ENCODE measurements at regions of chr4 and their contacts with region 1.

Region 1: DNA sequence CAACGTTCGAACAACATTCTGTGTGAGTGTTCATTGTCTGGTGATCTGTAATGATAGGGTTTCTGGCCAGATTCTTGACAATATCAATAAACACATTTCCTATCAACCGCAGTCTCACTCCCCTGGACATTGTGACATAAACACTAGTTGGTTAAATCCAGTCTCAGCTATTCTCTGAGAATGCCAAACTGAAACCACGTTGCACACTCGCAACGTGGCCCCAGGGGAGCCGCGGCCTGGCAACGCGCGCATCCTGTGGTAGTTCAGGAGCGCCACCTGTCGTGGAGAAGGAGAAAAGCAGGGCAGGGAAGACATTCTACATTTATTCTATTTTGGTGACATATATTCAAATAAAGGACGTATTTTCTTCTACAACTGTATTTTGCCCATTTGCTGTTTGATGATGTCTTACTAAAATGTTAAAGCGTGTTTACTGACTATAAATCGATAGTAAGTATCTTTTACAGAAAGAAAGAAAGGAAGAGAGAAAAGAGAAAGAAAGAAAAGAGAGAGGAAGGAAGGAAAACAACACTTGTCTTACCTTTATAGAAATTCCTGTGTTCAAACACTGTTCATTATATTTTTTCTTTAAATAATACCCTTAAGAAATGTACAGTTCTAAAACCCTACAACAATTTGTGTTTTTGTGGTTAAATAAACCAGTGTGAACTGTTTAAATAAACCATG is 738.3 kb upstream of the FRG1 start:
- DNase-seq: peak in 1 of 2 experiments; percentile 72
- H3K4me3 ChIP-seq: no peak overlapping the region
- H3K27ac ChIP-seq: no peak overlapping the region
- H3K4me1 ChIP-seq: peaks cover 0 to 2% (median 0%) of the 10 kb centered on the region in 4 experiments; a peak in 2 of 7 replicates
- H3K27me3 ChIP-seq: no peaks in the 10 kb centered on the region
- CTCF ChIP-seq: peak; percentile 74 to 90 (median 86)
- EP300 ChIP-seq: no peak
- POLR2A ChIP-seq: no peak
- RAD21 ChIP-seq: peak; percentile 98 to 99

Region 2: DNA sequence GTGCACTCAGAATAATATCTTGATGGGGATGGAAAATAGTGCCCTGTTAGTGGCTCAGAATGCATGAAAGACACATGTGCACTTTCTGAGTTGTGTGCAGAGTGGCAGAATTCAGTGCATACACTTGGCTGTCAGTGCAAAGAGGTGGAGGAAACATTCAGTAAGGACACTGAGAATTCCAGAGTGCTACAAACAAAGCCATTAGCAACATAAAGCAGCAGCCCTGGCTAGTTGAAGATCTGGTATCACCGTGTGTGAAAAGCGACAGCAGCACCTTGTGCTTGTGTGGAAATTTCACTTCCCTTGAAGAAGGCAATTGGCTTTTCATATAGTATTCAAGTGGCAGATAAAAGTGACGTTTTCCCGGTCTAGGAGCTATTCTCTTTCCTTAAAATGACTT is 252.7 kb before region 1 on chr4:
- CTCF ChIA-PET with region 1: no interaction called
- POLR2A ChIA-PET with region 1: no interaction called
- DNase-seq: no peak
- H3K4me3 ChIP-seq: no peak overlapping the region
- H3K27ac ChIP-seq: no peak overlapping the region
- H3K4me1 ChIP-seq: peaks cover 0 to 2% (median 0%) of the 10 kb centered on the region in 4 experiments; a peak in 1 of 7 replicates
- H3K27me3 ChIP-seq: no peaks in the 10 kb centered on the region
- CTCF ChIP-seq: no peak
- EP300 ChIP-seq: no peak
- POLR2A ChIP-seq: no peak
- RAD21 ChIP-seq: peak in 1 of 2 experiments; percentile 17; a peak in 1 of 4 replicates

Region 3: GRCh38 chr4:189096717-189097116 is 105.6 kb before region 1 on chr4:
- CTCF ChIA-PET with region 1: interaction called, 32 read pairs
- POLR2A ChIA-PET with region 1: no interaction called
- DNase-seq: peak in 1 of 2 experiments; percentile 86
- H3K4me3 ChIP-seq: no peak overlapping the region
- H3K27ac ChIP-seq: no peak overlapping the region
- H3K4me1 ChIP-seq: no peaks in the 10 kb centered on the region
- H3K27me3 ChIP-seq: no peaks in the 10 kb centered on the region
- CTCF ChIP-seq: peak; percentile 87 to 99 (median 89)
- EP300 ChIP-seq: no peak
- POLR2A ChIP-seq: no peak
- RAD21 ChIP-seq: peak; percentile 69 to 80

Region 4: GRCh38 chr4:189124149-189124758 is 78.1 kb before region 1 on chr4:
- CTCF ChIA-PET with region 1: interaction called, 12 read pairs
- POLR2A ChIA-PET with region 1: no interaction called
- DNase-seq: no peak
- H3K4me3 ChIP-seq: no peak overlapping the region
- H3K27ac ChIP-seq: no peak overlapping the region
- H3K4me1 ChIP-seq: no peaks in the 10 kb centered on the region
- H3K27me3 ChIP-seq: no peaks in the 10 kb centered on the region
- CTCF ChIP-seq: peak; percentile 61 to 72 (median 69)
- EP300 ChIP-seq: no peak
- POLR2A ChIP-seq: no peak
- RAD21 ChIP-seq: peak; percentile 89 to 92

Region 5: GRCh38 chr4:189162073-189162789 is 40.1 kb before region 1 on chr4:
- CTCF ChIA-PET with region 1: interaction called, 12 read pairs
- POLR2A ChIA-PET with region 1: no interaction called
- DNase-seq: no peak
- H3K4me3 ChIP-seq: peak overlapping the region in 1 of 4 experiments; percentile 39; a peak in 3 of 8 replicates
- H3K27ac ChIP-seq: peak overlapping the region; percentile 65
- H3K4me1 ChIP-seq: peaks cover 0 to 25% (median 11%) of the 10 kb centered on the region in 4 experiments; a peak in 5 of 7 replicates
- H3K27me3 ChIP-seq: no peaks in the 10 kb centered on the region
- CTCF ChIP-seq: no peak
- EP300 ChIP-seq: no peak
- POLR2A ChIP-seq: peak in 1 of 2 experiments; percentile 58; a peak in 1 of 3 replicates
- RAD21 ChIP-seq: no peak; a peak in 1 of 4 replicates

Region 6: GRCh38 chr4:189228720-189229119 is 26.4 kb after region 1 on chr4:
- CTCF ChIA-PET with region 1: no interaction called
- POLR2A ChIA-PET with region 1: no interaction called
- DNase-seq: no peak
- H3K4me3 ChIP-seq: no peak overlapping the region
- H3K27ac ChIP-seq: no peak overlapping the region
- H3K4me1 ChIP-seq: no peaks in the 10 kb centered on the region
- H3K27me3 ChIP-seq: no peaks in the 10 kb centered on the region
- CTCF ChIP-seq: no peak
- EP300 ChIP-seq: no peak
- POLR2A ChIP-seq: no peak
- RAD21 ChIP-seq: no peak

Region 7: DNA sequence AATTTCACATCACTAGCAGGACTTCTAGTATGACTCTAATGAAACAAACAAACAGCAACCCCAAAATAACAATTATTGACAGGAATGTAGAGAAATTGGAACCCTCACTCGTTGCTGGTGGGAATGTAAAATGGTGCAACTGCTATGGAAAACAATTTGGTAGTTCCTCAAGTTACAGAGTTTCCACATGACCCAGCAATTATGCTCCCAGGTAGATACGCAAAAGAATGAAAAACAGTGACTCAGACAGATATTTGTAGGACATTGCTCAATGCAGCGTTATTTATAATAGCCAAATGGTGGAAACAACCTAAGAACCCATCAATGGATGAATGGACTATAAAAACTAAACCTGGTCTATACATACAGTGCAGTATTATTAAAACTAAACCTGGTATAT is 92.2 kb after region 1 on chr4:
- CTCF ChIA-PET with region 1: no interaction called
- POLR2A ChIA-PET with region 1: no interaction called
- DNase-seq: no peak
- H3K4me3 ChIP-seq: no peak overlapping the region
- H3K27ac ChIP-seq: no peak overlapping the region
- H3K4me1 ChIP-seq: no peaks in the 10 kb centered on the region
- H3K27me3 ChIP-seq: no peaks in the 10 kb centered on the region
- CTCF ChIP-seq: no peak
- EP300 ChIP-seq: no peak
- POLR2A ChIP-seq: no peak
- RAD21 ChIP-seq: no peak